PC-9 (cell line): ENCODE measurements at regions of chr7 and their contacts with region 1.

Region 1: GRCh38 chr7:105336009-105336408 is 52.7 kb downstream of the SRPK2 start:
- DNase-seq: no peak
- H3K4me3 ChIP-seq: no peak overlapping the region
- H3K27ac ChIP-seq: no peak overlapping the region
- H3K4me1 ChIP-seq: no peaks in the 10 kb centered on the region
- H3K27me3 ChIP-seq: no peaks in the 10 kb centered on the region
- CTCF ChIP-seq: peak; percentile 71

Region 2: DNA sequence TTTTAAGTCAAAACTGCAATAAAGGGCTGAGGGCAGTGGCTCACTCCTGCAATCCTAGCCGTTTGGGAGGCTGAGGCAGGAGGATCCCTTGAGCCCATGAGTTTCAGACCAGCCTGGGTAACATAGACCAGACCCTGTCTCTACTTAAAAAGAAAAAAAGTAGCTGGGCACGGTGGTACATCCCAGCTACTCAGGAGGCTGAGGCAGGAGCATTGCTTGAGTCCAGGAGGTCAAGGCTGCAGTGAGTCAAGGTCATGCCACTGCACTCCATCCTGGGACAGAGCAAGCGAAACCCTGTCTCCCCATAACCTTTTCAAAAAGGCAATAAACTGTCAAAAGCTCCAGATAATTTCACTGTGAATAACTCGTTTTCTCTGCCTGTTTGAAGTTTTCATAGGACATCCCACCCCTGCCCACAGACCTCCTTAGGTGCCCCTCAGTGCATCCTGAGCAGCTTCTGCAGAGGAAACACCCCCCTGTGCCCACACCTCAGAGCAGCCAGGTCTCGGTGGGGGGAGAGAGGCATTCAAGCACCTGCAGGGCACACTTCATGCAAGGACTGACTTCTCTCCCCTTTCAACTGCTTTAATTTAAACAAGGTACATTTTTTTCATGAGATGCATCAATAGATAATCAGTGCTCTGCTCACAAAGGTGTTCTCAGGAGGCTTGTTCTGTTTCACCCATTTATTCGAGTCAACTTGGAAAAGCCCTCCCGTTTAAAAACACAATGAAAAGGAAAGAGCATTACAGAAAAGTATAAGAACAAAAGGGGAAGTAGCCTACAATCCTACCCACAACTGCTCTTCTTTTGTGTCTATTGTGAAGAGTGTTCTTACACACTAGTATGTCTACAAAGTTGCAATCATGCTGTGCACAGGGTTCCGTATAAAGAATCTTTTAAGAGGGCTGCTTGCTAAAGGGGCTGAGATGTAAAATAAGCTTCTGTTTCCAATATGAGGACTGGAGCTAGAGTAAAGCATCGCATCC is 217.1 kb before region 1 on chr7:
- CTCF ChIA-PET with region 1: no interaction called
- POLR2A ChIA-PET with region 1: no interaction called
- intact Hi-C with region 1: loop called (anchors 10 kb)
- DNase-seq: no peak
- H3K4me3 ChIP-seq: no peak overlapping the region
- H3K27ac ChIP-seq: no peak overlapping the region
- H3K4me1 ChIP-seq: no peaks in the 10 kb centered on the region
- H3K27me3 ChIP-seq: no peaks in the 10 kb centered on the region
- CTCF ChIP-seq: no peak

Region 3: DNA sequence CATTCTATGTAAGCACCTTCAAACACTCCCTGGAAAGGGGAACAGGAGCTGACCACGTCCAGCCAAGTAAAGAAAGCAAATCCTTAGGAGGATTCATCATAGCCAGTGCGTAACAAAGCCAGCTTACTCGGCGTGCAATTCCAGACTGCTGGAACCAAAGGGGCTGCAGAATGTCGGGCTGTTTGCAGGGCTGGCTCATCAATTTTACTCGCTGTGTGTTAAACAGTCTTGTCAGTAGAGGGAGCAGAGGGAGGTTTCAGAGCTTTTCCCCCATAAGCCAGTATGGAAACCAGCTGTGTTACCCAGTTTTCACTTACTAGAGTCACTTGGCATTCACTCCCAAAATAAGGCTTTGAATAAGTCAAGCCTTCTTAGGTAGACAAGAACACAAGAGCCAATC is 194.9 kb before region 1 on chr7:
- CTCF ChIA-PET with region 1: no interaction called
- POLR2A ChIA-PET with region 1: no interaction called
- intact Hi-C with region 1: loop called (anchors 10 kb)
- DNase-seq: no peak
- H3K4me3 ChIP-seq: no peak overlapping the region
- H3K27ac ChIP-seq: no peak overlapping the region
- H3K4me1 ChIP-seq: peaks cover 8% of the 10 kb centered on the region
- H3K27me3 ChIP-seq: no peaks in the 10 kb centered on the region
- CTCF ChIP-seq: no peak; the same call in 1 of the 2 replicates

Region 4: GRCh38 chr7:105429746-105430612 is 94.0 kb after region 1 on chr7:
- CTCF ChIA-PET with region 1: no interaction called
- POLR2A ChIA-PET with region 1: interaction called, 14 read pairs
- intact Hi-C with region 1: no loop called
- DNase-seq: peak; percentile 39 to 45
- H3K4me3 ChIP-seq: no peak overlapping the region
- H3K27ac ChIP-seq: no peak overlapping the region
- H3K4me1 ChIP-seq: no peaks in the 10 kb centered on the region
- H3K27me3 ChIP-seq: no peaks in the 10 kb centered on the region
- CTCF ChIP-seq: peak; percentile 70